Naive thymus-derived CD4-positive, alpha-beta T cell (primary cell): ENCODE measurements at regions of chr14 and their contacts with region 1.

Region 1: DNA sequence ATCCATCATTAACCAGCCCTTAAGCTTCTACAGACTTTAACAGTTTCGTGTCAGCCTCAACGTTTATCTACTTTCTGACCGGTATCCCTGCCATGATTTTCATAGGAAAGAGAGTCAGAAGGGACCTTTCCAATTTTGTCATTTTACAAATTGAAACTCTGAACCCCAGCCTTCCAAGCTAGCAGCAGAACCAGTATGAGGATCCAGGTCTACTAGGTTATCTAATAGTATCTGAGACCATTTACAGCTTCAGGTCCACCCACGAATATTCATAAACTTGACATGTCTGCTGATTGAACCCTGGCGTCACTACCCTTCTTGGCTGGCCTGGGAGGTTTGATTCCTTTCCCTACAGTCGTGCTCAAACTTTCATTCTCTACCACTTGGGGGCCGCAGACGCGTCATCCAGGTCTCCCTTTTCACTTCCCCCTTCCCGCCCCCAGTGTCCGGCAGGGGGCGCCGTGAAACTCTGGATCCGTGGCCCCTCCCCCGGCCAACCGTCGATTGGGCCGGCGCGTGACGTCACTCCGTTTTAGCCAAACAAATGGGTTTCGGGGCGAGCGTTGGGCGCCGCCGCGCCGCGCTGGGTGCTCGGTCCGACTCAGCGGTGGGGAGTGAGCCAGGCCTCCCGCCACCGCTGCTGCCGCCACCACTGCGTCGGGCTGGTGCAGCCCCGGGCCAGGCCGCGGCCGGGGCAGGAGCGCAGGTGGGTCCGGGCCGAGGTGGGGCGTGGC is at the start of gene FBXO34:
- DNase-seq: peak; percentile 96 to 100 (median 99)
- ATAC-seq: peak; percentile 96
- H3K4me3 ChIP-seq: peak within 1 kb of the TSS; percentile 64
- H3K4me3 Mint-ChIP-seq: peak within 1 kb of the TSS; percentile 85 to 94 (median 92)
- H3K27ac ChIP-seq: peak within 1 kb of the TSS; percentile 88
- H3K27ac Mint-ChIP-seq: peak within 1 kb of the TSS; percentile 85 to 96 (median 94)
- H3K4me1 ChIP-seq: peaks cover 4 to 19% of the 10 kb centered on the region in 2 donors
- H3K4me1 Mint-ChIP-seq: peaks cover 19 to 48% (median 40%) of the 10 kb centered on the region in 7 donors
- H3K27me3 ChIP-seq: no peaks in the 10 kb centered on the region
- H3K27me3 Mint-ChIP-seq: peaks cover 0 to 3% (median 0%) of the 10 kb centered on the region in 5 donors
- total RNA-seq, gene FBXO34: 22.0 to 27.3 (median 25.8) TPM

Region 2: GRCh38 chr14:54396493-54397335 is 874.3 kb before region 1 on chr14 and contains the start of gene CDKN3:
- CTCF ChIA-PET with region 1: no interaction called
- POLR2A ChIA-PET with region 1: no interaction called
- intact Hi-C with region 1: loop called in 1 of 2 experiments (anchors 5 kb)
- DNase-seq: peak; percentile 91 to 96 (median 95)
- ATAC-seq: peak; percentile 98
- H3K4me3 ChIP-seq: peak within 1 kb of the TSS; percentile 85
- H3K4me3 Mint-ChIP-seq: peak within 1 kb of the TSS; percentile 81 to 96 (median 90)
- H3K27ac ChIP-seq: peak within 1 kb of the TSS; percentile 46
- H3K27ac Mint-ChIP-seq: peak within 1 kb of the TSS; percentile 24 to 93 (median 83)
- H3K4me1 ChIP-seq: peaks cover 0 to 9% of the 10 kb centered on the region in 2 donors
- H3K4me1 Mint-ChIP-seq: peaks cover 0 to 38% (median 12%) of the 10 kb centered on the region in 7 donors
- H3K27me3 ChIP-seq: no peaks in the 10 kb centered on the region
- H3K27me3 Mint-ChIP-seq: peaks cover 0 to 2% (median 0%) of the 10 kb centered on the region in 5 donors
- total RNA-seq, gene CDKN3: 0.93 to 48.1 (median 3.0) TPM

Region 3: GRCh38 chr14:54857830-54858269 is 413.1 kb before region 1 on chr14:
- CTCF ChIA-PET with region 1: no interaction called
- POLR2A ChIA-PET with region 1: no interaction called
- intact Hi-C with region 1: no loop called
- DNase-seq: no peak
- ATAC-seq: peak; percentile 61
- H3K4me3 ChIP-seq: no peak overlapping the region
- H3K4me3 Mint-ChIP-seq: peak overlapping the region in 1 of 10 donors; percentile 14
- H3K27ac ChIP-seq: no peak overlapping the region
- H3K27ac Mint-ChIP-seq: peak overlapping the region in 3 of 9 donors; percentile 12 to 40 (median 18)
- H3K4me1 ChIP-seq: no peaks in the 10 kb centered on the region
- H3K4me1 Mint-ChIP-seq: peaks cover 10 to 34% (median 21%) of the 10 kb centered on the region in 7 donors
- H3K27me3 ChIP-seq: no peaks in the 10 kb centered on the region
- H3K27me3 Mint-ChIP-seq: no peaks in the 10 kb centered on the region

Region 4: GRCh38 chr14:55191203-55192053 is 79.6 kb before region 1 on chr14 and contains the start of gene DLGAP5:
- CTCF ChIA-PET with region 1: interaction called, 3 read pairs
- POLR2A ChIA-PET with region 1: no interaction called
- intact Hi-C with region 1: loop called (anchors 1 kb)
- DNase-seq: peak; percentile 59 to 90 (median 86)
- ATAC-seq: peak; percentile 98
- H3K4me3 ChIP-seq: peak within 1 kb of the TSS; percentile 84
- H3K4me3 Mint-ChIP-seq: peak within 1 kb of the TSS; percentile 88 to 97 (median 90)
- H3K27ac ChIP-seq: peak within 1 kb of the TSS; percentile 58
- H3K27ac Mint-ChIP-seq: peak within 1 kb of the TSS; percentile 46 to 92 (median 68)
- H3K4me1 ChIP-seq: peaks cover 7 to 10% of the 10 kb centered on the region in 2 donors
- H3K4me1 Mint-ChIP-seq: peaks cover 5 to 42% (median 18%) of the 10 kb centered on the region in 7 donors
- H3K27me3 ChIP-seq: no peaks in the 10 kb centered on the region
- H3K27me3 Mint-ChIP-seq: peaks cover 0 to 4% (median 0%) of the 10 kb centered on the region in 5 donors
- total RNA-seq, gene DLGAP5: 0.49 to 46.7 TPM in 2 of 5 experiments, not detected in the others

Region 5: DNA sequence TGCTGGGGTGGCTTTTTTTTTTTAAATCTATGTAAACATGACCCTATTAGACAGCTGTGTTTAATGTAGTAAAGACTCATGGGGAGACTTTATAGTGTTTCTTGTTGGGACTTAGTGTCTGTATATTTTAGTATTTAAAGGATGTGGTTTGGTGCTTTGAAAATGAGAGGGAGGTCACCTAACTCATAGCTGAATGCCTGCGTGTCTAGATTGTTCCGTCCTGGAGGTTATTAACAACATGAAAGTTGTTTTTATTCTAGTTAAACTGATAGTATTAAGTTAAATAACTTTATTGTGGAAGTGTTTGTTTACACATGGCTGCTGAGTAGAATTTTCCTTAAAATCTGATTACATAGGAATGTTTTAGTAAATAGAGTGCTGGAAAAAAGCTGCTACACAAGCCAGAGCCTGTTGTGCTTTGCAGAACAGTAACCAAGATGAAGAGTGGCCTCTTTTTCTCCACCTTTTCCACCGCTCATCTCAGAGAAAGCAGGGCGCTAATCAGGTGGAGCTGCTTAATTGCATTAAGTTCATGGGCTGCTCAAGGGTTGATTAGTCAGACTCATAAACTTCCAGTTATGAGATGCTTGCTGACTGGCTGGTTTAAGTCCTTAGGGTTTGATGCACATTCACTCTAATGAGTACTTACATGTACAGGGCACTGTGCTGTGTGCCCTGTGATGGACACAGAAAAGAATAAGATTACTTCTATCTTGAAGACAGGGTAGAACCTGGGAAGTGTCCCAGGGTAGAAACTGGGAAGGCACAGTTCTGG is 62.9 kb after region 1 on chr14:
- CTCF ChIA-PET with region 1: interaction called, 8 read pairs
- POLR2A ChIA-PET with region 1: interaction called, 3 read pairs
- intact Hi-C with region 1: loop called (anchors 1 kb)
- DNase-seq: no peak
- ATAC-seq: peak; percentile 13
- H3K4me3 ChIP-seq: peak overlapping the region; percentile 19
- H3K4me3 Mint-ChIP-seq: peak overlapping the region; percentile 10 to 89 (median 84)
- H3K27ac ChIP-seq: peak overlapping the region; percentile 69
- H3K27ac Mint-ChIP-seq: peak overlapping the region; percentile 77 to 92 (median 85)
- H3K4me1 ChIP-seq: peaks cover 46 to 55% of the 10 kb centered on the region in 2 donors
- H3K4me1 Mint-ChIP-seq: peaks cover 49 to 94% (median 81%) of the 10 kb centered on the region in 7 donors
- H3K27me3 ChIP-seq: no peaks in the 10 kb centered on the region
- H3K27me3 Mint-ChIP-seq: no peaks in the 10 kb centered on the region

Region 6: DNA sequence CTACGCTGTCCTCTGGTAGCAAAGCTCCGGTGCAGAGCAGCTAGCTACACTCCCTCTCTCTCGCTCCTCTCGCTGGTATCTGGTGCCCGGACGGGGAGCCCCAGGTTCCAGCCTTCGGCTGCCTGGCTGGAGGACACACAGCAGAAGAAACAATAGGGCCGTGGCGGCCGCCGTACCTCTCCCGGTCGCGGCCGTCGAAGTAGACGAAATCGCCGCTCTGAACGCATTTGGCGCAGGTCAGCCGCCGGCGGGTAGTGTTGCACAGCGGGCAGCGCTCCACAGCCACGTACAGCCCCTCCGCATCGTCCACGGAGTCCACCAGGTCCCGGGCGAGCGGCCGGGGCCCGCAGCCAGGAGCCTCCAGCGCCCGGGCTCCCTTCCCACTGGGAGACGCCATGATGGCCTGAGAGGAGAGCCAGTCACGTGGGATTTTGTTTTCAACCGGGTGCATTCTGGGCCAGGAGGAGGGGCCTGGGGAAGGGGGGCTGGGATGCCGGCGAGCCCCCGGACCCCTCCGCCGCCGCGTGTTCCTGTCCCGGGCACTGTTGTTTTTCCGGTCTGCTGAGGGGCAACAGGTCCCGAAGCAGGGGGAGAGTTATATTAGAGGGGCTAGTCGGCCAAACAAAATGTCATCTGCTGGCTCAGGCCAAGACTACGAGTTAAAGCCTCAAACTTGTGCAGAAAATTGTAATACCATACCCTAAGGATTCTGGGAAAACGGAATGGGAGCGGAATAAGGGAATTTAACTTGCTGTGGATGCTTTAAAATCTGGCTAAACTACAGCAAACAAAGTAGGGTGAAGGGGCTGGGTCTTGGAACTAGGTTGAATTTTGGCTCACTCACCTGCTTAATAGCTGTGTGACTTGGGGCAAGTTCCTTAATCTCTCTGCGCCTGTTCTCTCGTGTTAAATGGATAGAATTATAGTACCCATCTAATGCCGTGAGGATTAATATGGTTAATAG is 140.7 kb after region 1 on chr14 and contains the start of gene ATG14:
- CTCF ChIA-PET with region 1: interaction called, 4 read pairs
- POLR2A ChIA-PET with region 1: no interaction called
- intact Hi-C with region 1: loop called (anchors 1 kb)
- DNase-seq: peak; percentile 48 to 78 (median 66)
- ATAC-seq: peak; percentile 98
- H3K4me3 ChIP-seq: peak within 1 kb of the TSS; percentile 68
- H3K4me3 Mint-ChIP-seq: peak within 1 kb of the TSS; percentile 68 to 94 (median 92)
- H3K27ac ChIP-seq: peak within 1 kb of the TSS; percentile 86
- H3K27ac Mint-ChIP-seq: peak within 1 kb of the TSS; percentile 86 to 95 (median 90)
- H3K4me1 ChIP-seq: peaks cover 11 to 16% of the 10 kb centered on the region in 2 donors
- H3K4me1 Mint-ChIP-seq: peaks cover 26 to 56% (median 39%) of the 10 kb centered on the region in 7 donors
- H3K27me3 ChIP-seq: no peaks in the 10 kb centered on the region
- H3K27me3 Mint-ChIP-seq: peaks cover 0 to 5% (median 0%) of the 10 kb centered on the region in 5 donors
- total RNA-seq, gene ATG14: 7.8 to 19.6 (median 18.8) TPM

Region 7: DNA sequence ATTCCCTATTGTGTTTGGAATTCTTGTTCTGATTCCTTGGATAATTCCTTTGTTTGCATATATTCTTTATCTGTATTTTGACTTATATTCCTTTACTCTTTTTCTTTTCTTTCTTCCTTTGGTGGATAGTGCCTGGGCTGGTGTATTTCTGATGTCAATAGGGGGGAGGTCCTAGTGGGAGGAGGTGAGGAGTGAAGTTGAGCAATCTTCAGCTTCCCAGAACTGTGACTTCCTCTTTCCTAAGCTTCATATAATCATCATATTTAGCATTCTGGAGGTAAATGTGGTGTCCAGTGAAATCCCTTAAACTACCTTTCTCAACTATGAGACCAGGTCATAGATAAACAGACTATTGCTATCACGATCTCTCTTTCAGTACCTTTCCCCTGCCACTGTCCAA is 199.0 kb after region 1 on chr14:
- CTCF ChIA-PET with region 1: no interaction called
- POLR2A ChIA-PET with region 1: no interaction called
- intact Hi-C with region 1: no loop called
- DNase-seq: no peak
- ATAC-seq: no peak
- H3K4me3 ChIP-seq: no peak overlapping the region
- H3K4me3 Mint-ChIP-seq: no peak overlapping the region
- H3K27ac ChIP-seq: no peak overlapping the region
- H3K27ac Mint-ChIP-seq: no peak overlapping the region
- H3K4me1 ChIP-seq: no peaks in the 10 kb centered on the region
- H3K4me1 Mint-ChIP-seq: peaks cover 0 to 9% (median 0%) of the 10 kb centered on the region in 7 donors
- H3K27me3 ChIP-seq: no peaks in the 10 kb centered on the region
- H3K27me3 Mint-ChIP-seq: peaks cover 0 to 11% (median 3%) of the 10 kb centered on the region in 5 donors

Region 8: GRCh38 chr14:55807059-55807499 is 536.1 kb after region 1 on chr14:
- CTCF ChIA-PET with region 1: no interaction called
- POLR2A ChIA-PET with region 1: no interaction called
- intact Hi-C with region 1: loop called in 1 of 2 experiments (anchors 5 kb)
- DNase-seq: peak; percentile 46 to 91 (median 82)
- ATAC-seq: peak; percentile 91
- H3K4me3 ChIP-seq: peak overlapping the region; percentile 23
- H3K4me3 Mint-ChIP-seq: peak overlapping the region; percentile 31 to 70 (median 54)
- H3K27ac ChIP-seq: peak overlapping the region; percentile 61
- H3K27ac Mint-ChIP-seq: peak overlapping the region; percentile 90 to 98 (median 91)
- H3K4me1 ChIP-seq: peaks cover 16 to 17% of the 10 kb centered on the region in 2 donors
- H3K4me1 Mint-ChIP-seq: peaks cover 25 to 64% (median 36%) of the 10 kb centered on the region in 7 donors
- H3K27me3 ChIP-seq: no peaks in the 10 kb centered on the region
- H3K27me3 Mint-ChIP-seq: no peaks in the 10 kb centered on the region

Region 9: GRCh38 chr14:57268161-57269069 is 1997.4 kb after region 1 on chr14 and contains the starts of genes AP5M1 and EXOC5:
- CTCF ChIA-PET with region 1: no interaction called
- POLR2A ChIA-PET with region 1: no interaction called
- intact Hi-C with region 1: loop called in 1 of 2 experiments (anchors 5 kb)
- DNase-seq: peak; percentile 78 to 95 (median 93)
- ATAC-seq: peak; percentile 89
- H3K4me3 ChIP-seq: peak within 1 kb of the TSS; percentile 89
- H3K4me3 Mint-ChIP-seq: peak within 1 kb of the TSS; percentile 97 to 100 (median 99)
- H3K27ac ChIP-seq: peak within 1 kb of the TSS; percentile 91
- H3K27ac Mint-ChIP-seq: peak within 1 kb of the TSS; percentile 98 to 100 (median 99)
- H3K4me1 ChIP-seq: peaks cover 29 to 34% of the 10 kb centered on the region in 2 donors
- H3K4me1 Mint-ChIP-seq: peaks cover 41 to 93% (median 76%) of the 10 kb centered on the region in 7 donors
- H3K27me3 ChIP-seq: no peaks in the 10 kb centered on the region
- H3K27me3 Mint-ChIP-seq: no peaks in the 10 kb centered on the region
- total RNA-seq, gene AP5M1: 42.3 to 62.8 (median 52.1) TPM
- total RNA-seq, gene EXOC5: 27.3 to 71.6 (median 42.2) TPM